ENCODE measurements at regions of chrX and their contacts with region 1.

Region 1: DNA sequence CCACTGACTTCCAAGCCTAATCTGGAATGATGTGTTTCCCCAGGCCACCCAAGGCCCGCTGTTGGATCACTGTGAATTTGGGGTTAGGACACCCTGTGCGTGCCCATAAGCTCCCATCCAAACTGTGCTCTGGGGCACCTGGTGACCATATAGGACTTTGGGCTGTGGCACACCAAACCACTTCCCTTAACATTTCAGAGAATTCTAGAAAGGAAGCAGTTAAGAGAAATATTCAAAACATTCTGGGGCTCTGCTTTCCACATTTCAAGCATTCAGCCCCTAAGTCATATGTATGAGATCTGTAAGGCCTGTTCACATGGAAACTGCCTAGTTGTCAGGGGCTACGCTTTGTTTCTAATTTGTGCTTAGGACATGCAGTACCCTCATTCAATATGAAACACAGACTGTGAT is 14.4 kb downstream of the VGLL1 start:
- DNase-seq: peak; percentile 51
- ATAC-seq: peak; percentile 87
- H3K4me3 Mint-ChIP-seq: peak overlapping the region; percentile 57
- H3K27ac Mint-ChIP-seq: peak overlapping the region; percentile 93
- H3K4me1 Mint-ChIP-seq: peaks cover 47% of the 10 kb centered on the region
- H3K27me3 Mint-ChIP-seq: no peaks in the 10 kb centered on the region

Region 2: DNA sequence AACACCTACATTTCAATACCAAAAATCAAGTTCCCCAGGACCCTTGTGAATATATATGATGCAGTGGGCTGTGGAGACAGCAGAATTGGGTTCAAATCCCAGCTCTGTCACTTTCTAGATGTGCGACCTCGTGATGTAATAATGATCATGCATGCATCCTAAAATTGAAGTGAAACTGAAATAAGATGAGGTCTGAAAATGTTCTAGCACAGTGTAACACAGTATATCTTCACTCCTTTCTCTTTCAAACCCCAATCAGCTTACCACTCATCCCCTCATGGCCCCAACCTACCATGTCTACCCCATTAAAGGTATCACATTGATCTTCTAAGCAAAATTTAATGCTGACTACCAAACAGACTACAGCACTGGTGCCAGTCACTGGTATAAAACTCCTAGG is 128.6 kb before region 1 on chrX:
- POLR2A ChIA-PET with region 1: no interaction called
- DNase-seq: no peak
- ATAC-seq: no peak
- H3K4me3 Mint-ChIP-seq: no peak overlapping the region
- H3K27ac Mint-ChIP-seq: no peak overlapping the region
- H3K4me1 Mint-ChIP-seq: no peaks in the 10 kb centered on the region
- H3K27me3 Mint-ChIP-seq: peaks cover 1% of the 10 kb centered on the region

Region 3: GRCh38 chrX:136496770-136497598 is 49.4 kb before region 1 on chrX and contains the start of gene HTATSF1:
- POLR2A ChIA-PET with region 1: interaction called, 14 read pairs
- DNase-seq: peak; percentile 87
- ATAC-seq: peak; percentile 82
- H3K4me3 Mint-ChIP-seq: peak within 1 kb of the TSS; percentile 97
- H3K27ac Mint-ChIP-seq: peak within 1 kb of the TSS; percentile 97
- H3K4me1 Mint-ChIP-seq: peaks cover 12% of the 10 kb centered on the region
- H3K27me3 Mint-ChIP-seq: no peaks in the 10 kb centered on the region
- total RNA-seq, gene HTATSF1: 63.8 to 65.2 TPM

Region 4: DNA sequence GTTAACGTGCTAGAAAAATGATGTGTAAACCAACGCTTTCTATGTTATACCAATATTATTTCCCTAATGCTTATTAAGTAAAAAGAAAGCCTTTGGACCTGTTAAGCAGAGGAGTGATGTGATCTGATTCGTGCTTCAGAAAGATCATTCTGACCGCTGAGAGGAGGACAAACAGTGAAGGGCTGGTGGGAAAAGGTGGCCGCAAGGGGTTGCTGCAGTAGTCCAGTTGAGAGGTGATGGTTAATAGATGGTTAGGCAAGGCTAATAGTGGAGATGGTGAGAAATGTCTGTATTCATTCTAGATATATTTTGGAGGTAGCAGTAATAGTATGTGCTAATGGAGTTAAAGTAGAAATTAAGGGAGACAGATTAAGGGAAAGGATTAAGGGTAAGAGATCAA is 27.3 kb before region 1 on chrX:
- POLR2A ChIA-PET with region 1: no interaction called
- DNase-seq: no peak
- ATAC-seq: no peak
- H3K4me3 Mint-ChIP-seq: no peak overlapping the region
- H3K27ac Mint-ChIP-seq: no peak overlapping the region
- H3K4me1 Mint-ChIP-seq: peaks cover 6% of the 10 kb centered on the region
- H3K27me3 Mint-ChIP-seq: no peaks in the 10 kb centered on the region

Measured in activated naive CD8-positive, alpha-beta T cell treated with anti-CD3 and anti-CD28 coated beads, Interleukin-2, amount 10 ng/mL, durations not matched to agents 7 days and 5 days (primary cell).